Naive thymus-derived CD4-positive, alpha-beta T cell (primary cell): ENCODE measurements at regions of chr10 and their contacts with region 1.

Region 1: DNA sequence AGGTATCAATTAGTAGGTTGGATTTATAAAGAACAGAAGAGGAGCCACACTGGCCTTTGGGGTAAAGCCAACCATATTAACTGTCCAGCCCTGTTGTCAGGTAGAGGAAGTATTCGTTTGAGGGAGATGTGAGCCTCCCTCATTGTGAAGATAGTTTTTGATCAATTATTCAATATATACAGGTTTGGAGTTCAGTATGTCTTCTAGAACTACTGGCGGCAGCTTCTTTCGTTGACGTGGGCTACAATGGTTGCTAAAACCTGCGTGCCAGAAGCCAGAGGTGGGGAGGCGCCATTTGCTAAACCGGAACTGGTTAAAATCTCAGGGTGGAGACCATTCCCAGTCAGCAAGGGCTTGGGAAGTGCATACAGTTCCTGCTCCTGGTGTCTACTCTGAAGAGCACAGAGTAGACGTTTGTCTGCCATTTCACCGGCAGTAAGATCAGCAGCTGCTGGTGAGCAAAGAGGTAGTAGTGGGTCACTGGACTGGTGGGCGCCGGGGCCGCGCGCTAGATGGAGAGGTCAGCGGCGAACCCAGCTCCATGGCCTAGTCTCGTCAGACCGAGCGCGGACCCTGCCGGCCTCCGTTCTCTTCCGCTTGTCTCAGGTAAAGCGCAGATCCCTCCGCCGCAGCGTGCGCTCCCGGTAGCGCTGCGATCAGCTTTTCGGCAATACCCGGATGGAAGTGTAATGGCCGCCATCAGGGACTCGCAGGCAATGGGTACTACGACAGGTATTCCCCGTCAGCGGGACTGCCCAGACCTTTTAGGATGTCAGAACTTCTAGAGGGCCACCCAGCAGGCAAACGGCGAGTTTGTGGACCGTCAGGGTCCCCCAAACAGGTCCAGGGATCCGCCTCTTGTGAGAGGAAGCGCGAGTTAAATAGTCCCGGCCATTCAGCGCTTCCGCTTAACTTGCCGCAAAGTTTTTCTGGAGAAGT is at the start of gene ZNF518A:
- DNase-seq: peak; percentile 86 to 96 (median 94)
- ATAC-seq: peak; percentile 90
- H3K4me3 ChIP-seq: peak within 1 kb of the TSS; percentile 88
- H3K4me3 Mint-ChIP-seq: peak within 1 kb of the TSS; percentile 79 to 98 (median 94)
- H3K27ac ChIP-seq: peak within 1 kb of the TSS; percentile 97
- H3K27ac Mint-ChIP-seq: peak within 1 kb of the TSS; percentile 97 to 100 (median 99)
- H3K4me1 ChIP-seq: peaks cover 6 to 20% of the 10 kb centered on the region in 2 donors
- H3K4me1 Mint-ChIP-seq: peaks cover 7 to 35% (median 32%) of the 10 kb centered on the region in 7 donors
- H3K27me3 ChIP-seq: peaks cover 0 to 8% of the 10 kb centered on the region in 2 donors
- H3K27me3 Mint-ChIP-seq: peaks cover 30 to 46% (median 39%) of the 10 kb centered on the region in 5 donors
- total RNA-seq, gene ZNF518A: 17.6 to 25.1 (median 21.5) TPM

Region 2: DNA sequence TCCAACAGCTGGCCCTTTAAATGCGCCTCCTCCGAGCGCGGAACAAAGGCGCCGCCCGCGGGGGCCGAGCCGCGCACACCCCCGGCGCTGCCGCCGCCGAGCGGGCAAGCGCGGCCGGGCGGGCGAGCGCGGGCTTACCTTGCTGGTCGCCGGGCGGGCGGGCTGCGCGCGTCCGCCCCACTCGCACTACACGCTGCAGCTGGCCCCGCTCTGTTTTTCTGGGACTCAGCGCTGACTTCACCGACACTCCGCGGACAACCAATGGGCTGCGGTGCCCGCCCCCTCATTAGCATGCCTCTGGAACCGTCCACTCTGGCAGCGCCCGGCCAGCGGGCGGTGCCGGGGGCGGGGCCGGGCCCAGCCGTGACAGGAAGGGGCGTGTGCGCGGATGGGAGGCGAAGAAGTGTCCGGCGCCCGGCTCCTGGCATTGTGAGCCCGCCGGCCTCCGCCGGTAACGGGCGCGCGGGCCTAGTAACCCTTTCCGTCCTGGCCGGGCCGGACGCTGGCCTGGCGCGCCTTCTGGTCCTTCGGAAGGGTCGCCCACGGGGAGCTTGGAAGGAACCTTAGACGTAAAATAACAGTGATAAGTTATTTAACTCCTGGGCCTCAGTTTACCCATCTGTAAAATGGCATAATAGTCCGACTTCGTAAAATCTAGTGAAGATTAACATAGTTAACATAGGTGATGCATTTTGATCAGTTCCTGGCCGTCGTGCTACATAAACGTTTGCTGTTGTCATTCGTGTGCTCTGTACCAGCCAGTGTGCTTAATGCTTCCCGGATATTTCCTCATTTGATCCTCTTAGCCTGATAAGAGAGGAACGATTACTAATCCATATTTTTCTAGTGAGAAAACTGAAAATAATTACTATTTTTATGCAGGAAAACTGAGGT is 568.2 kb before region 1 on chr10 and contains the start of gene SORBS1:
- CTCF ChIA-PET with region 1: no interaction called
- POLR2A ChIA-PET with region 1: interaction called, 3 read pairs
- intact Hi-C with region 1: loop called (anchors 1 kb)
- DNase-seq: peak; percentile 80 to 88 (median 82)
- ATAC-seq: peak; percentile 99
- H3K4me3 ChIP-seq: peak within 1 kb of the TSS; percentile 90
- H3K4me3 Mint-ChIP-seq: peak within 1 kb of the TSS; percentile 96 to 100 (median 99)
- H3K27ac ChIP-seq: peak within 1 kb of the TSS; percentile 66
- H3K27ac Mint-ChIP-seq: peak within 1 kb of the TSS; percentile 76 to 97 (median 89)
- H3K4me1 ChIP-seq: peaks cover 4% of the 10 kb centered on the region in 2 donors
- H3K4me1 Mint-ChIP-seq: peaks cover 7 to 16% (median 11%) of the 10 kb centered on the region in 7 donors
- H3K27me3 ChIP-seq: no peaks in the 10 kb centered on the region
- H3K27me3 Mint-ChIP-seq: peaks cover 0 to 63% (median 5%) of the 10 kb centered on the region in 5 donors
- total RNA-seq, gene SORBS1: 0.58 to 1.9 (median 1.4) TPM

Region 3: DNA sequence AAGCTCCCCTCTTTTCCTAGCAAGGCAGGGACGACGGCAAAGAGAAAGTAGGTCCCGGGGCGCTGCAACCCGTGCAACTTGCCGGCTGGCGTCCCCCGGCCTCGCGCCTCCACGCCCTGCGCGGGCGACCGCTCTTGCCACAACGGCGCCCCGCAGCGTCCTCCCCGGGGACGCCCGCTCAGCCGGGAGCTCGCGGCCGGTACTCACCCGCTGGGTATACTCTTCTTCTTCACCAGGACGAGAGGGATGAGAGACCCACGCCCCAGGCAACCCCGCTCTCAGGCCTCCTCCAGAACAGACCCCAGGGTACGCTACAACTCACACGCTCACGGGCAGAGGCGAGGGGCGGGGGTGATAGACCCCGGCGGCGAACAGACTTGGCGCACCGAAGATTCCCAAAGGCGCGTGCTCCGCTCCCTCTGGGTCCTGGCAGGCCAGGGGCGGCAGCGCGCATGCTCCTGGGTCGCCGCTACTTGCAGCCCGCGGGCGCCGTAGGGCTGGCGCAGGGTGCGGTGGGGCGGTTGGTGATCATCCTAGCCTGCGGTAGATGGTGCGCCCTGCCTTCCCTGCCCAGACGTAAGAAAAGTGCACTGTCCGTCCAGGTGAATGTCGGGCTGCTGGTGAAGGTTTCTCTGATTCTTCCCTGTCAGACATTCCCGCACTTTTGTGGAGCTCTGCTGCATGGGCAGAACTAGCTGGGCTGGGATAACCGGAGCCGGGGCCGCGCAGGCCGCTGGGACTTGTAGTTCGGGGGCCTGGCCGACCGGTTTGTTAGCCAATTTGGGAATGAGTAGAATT is 222.0 kb before region 1 on chr10 and contains the start of gene CC2D2B:
- CTCF ChIA-PET with region 1: no interaction called
- POLR2A ChIA-PET with region 1: interaction called, 3 read pairs
- intact Hi-C with region 1: loop called in 1 of 2 experiments (anchors 1 kb)
- DNase-seq: peak; percentile 26 to 78 (median 53)
- ATAC-seq: peak; percentile 84
- H3K4me3 ChIP-seq: peak within 1 kb of the TSS; percentile 62
- H3K4me3 Mint-ChIP-seq: peak within 1 kb of the TSS; percentile 92 to 95 (median 94)
- H3K27ac ChIP-seq: peak within 1 kb of the TSS; percentile 65
- H3K27ac Mint-ChIP-seq: peak within 1 kb of the TSS; percentile 29 to 92 (median 89)
- H3K4me1 ChIP-seq: no peaks in the 10 kb centered on the region
- H3K4me1 Mint-ChIP-seq: peaks cover 11 to 20% (median 18%) of the 10 kb centered on the region in 7 donors
- H3K27me3 ChIP-seq: no peaks in the 10 kb centered on the region
- H3K27me3 Mint-ChIP-seq: peaks cover 0 to 20% (median 0%) of the 10 kb centered on the region in 5 donors
- total RNA-seq, gene CC2D2B: 0.64 to 0.99 TPM in 2 of 5 experiments, not detected in the others

Region 4: GRCh38 chr10:96043033-96043932 is 86.4 kb before region 1 on chr10 and contains the start of gene CCNJ:
- CTCF ChIA-PET with region 1: interaction called, 5 read pairs
- POLR2A ChIA-PET with region 1: interaction called, 19 read pairs
- intact Hi-C with region 1: loop called (anchors 1 kb)
- DNase-seq: peak; percentile 76 to 87 (median 83)
- ATAC-seq: peak; percentile 91
- H3K4me3 ChIP-seq: peak within 1 kb of the TSS; percentile 78
- H3K4me3 Mint-ChIP-seq: peak within 1 kb of the TSS; percentile 83 to 96 (median 92)
- H3K27ac ChIP-seq: peak within 1 kb of the TSS; percentile 81
- H3K27ac Mint-ChIP-seq: peak within 1 kb of the TSS; percentile 80 to 96 (median 87)
- H3K4me1 ChIP-seq: peaks cover 13 to 16% of the 10 kb centered on the region in 2 donors
- H3K4me1 Mint-ChIP-seq: peaks cover 32 to 50% (median 44%) of the 10 kb centered on the region in 7 donors
- H3K27me3 ChIP-seq: peaks cover 3 to 4% of the 10 kb centered on the region in 2 donors
- H3K27me3 Mint-ChIP-seq: peaks cover 4 to 11% (median 8%) of the 10 kb centered on the region in 5 donors
- total RNA-seq, gene CCNJ: 5.6 to 8.0 (median 6.7) TPM

Region 5: DNA sequence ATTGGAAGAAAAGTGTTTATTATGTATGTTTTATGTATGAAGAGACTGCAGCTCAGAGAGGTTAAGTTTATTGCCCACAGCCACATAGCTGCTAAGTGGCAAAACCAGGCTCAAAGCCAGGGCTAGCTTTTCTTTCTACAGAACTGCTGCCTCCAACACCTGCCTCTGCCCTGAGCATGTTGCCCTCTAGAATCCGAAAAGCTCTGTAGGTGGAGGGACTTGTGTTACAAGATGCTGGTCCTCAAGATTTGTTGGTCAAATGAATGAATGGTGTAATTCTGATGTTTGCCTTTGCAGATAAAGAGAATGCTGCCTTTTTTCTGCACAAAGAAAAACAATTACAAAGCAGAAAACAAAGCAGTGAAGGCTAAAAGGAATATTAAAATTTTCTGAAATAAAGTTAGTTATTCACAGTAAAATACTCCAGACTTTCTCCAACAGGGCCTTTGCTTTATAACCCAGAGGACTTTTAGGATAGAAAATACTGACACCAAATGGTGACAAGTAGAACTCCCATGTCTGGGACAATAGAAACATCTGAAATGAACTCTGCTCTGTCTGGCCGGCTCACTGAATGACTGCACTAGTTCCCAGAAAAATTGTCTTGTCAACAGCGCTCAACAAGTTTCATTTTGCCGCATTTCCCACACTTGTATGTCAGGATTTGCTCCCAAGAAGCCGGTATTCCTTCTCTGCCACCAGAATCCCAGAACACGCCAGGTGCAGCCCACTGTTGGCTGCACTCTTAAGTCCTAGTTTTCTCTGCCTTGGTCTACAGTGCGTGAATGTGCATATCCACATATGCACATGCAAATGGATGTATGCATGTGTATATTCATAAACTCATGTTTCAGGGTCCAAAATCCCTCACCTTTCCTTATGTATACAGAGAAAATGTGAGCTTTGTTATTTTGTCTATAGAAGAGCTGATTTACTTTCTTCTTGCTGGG is 163.6 kb after region 1 on chr10:
- CTCF ChIA-PET with region 1: no interaction called
- POLR2A ChIA-PET with region 1: interaction called, 3 read pairs
- intact Hi-C with region 1: loop called in 1 of 2 experiments (anchors 2 kb)
- DNase-seq: peak in 6 of 9 donors; percentile 11 to 54 (median 44)
- ATAC-seq: peak; percentile 70
- H3K4me3 ChIP-seq: no peak overlapping the region
- H3K4me3 Mint-ChIP-seq: peak overlapping the region in 1 of 10 donors; percentile 2
- H3K27ac ChIP-seq: no peak overlapping the region
- H3K27ac Mint-ChIP-seq: peak overlapping the region in 5 of 9 donors; percentile 9 to 89 (median 42)
- H3K4me1 ChIP-seq: peaks cover 0 to 25% of the 10 kb centered on the region in 2 donors
- H3K4me1 Mint-ChIP-seq: peaks cover 8 to 54% (median 43%) of the 10 kb centered on the region in 7 donors
- H3K27me3 ChIP-seq: no peaks in the 10 kb centered on the region
- H3K27me3 Mint-ChIP-seq: peaks cover 0 to 3% (median 0%) of the 10 kb centered on the region in 5 donors